Ascending aorta (tissue), 2 donors: ENCODE measurements at regions of chr19 and their contacts with region 1.

Region 1: GRCh38 chr19:15324791-15325519 is 7.4 kb downstream of the BRD4 start:
- DNase-seq: no peak
- H3K4me3 ChIP-seq: peak overlapping the region in 1 of 2 donors; percentile 34
- H3K27ac ChIP-seq: peak overlapping the region; percentile 68 to 74
- H3K4me1 ChIP-seq: peaks cover 11 to 92% of the 10 kb centered on the region in 2 donors
- H3K27me3 ChIP-seq: no peaks in the 10 kb centered on the region
- CTCF ChIP-seq: peak in 1 of 3 experiments; percentile 12

Region 2: GRCh38 chr19:15280915-15281683 is 43.9 kb before region 1 on chr19:
- intact Hi-C with region 1: loop called (anchors 5 kb)
- DNase-seq: peak in 1 of 2 donors; percentile 84
- H3K4me3 ChIP-seq: no peak overlapping the region
- H3K27ac ChIP-seq: peak overlapping the region; percentile 71 to 73
- H3K4me1 ChIP-seq: peaks cover 37 to 95% of the 10 kb centered on the region in 2 donors
- H3K27me3 ChIP-seq: no peaks in the 10 kb centered on the region
- CTCF ChIP-seq: peak in 2 of 3 experiments; percentile 21 to 23

Region 3: DNA sequence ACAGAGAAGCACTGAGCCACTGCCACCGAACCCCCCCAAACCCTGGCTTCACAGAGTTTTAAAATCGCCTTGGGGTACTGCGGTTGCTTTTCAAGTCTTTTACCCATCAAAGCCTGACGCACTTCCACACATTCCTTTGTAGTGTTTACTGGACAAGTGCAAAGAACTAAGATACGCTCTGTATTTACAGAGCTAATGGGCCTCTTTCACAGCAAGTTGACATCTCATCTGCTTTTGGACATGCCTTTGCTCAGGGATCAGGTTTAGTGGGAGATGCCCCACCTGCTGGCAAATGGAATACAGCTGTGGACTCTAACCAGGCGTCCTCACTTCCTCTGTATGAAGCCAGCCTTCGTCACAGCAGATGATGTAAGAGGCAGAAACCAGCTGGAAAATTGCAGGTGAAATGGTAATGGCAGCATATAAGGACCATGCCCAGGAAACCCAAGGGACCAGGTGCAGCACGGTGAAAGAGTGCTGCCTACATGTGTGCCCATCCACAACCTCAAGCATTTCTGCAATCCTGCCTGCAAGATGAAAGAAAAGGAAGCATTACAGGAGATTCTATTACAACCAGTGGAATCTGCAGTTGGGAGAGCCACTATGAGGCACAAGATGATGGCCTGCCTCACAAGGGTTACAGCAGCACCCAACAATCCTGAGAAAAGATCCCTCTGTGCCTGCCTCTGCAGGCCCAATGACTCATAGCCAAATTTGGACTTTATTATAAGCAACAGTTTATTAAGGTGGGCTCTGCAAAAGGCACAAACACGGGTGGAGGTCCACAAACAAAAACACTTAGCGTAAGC is 27.3 kb before region 1 on chr19:
- intact Hi-C with region 1: loop called (anchors 2 kb)
- DNase-seq: no peak
- H3K4me3 ChIP-seq: peak overlapping the region in 1 of 2 donors; percentile 21
- H3K27ac ChIP-seq: peak overlapping the region; percentile 42 to 54
- H3K4me1 ChIP-seq: peaks cover 21 to 86% of the 10 kb centered on the region in 2 donors
- H3K27me3 ChIP-seq: no peaks in the 10 kb centered on the region
- CTCF ChIP-seq: no peak

Region 4: DNA sequence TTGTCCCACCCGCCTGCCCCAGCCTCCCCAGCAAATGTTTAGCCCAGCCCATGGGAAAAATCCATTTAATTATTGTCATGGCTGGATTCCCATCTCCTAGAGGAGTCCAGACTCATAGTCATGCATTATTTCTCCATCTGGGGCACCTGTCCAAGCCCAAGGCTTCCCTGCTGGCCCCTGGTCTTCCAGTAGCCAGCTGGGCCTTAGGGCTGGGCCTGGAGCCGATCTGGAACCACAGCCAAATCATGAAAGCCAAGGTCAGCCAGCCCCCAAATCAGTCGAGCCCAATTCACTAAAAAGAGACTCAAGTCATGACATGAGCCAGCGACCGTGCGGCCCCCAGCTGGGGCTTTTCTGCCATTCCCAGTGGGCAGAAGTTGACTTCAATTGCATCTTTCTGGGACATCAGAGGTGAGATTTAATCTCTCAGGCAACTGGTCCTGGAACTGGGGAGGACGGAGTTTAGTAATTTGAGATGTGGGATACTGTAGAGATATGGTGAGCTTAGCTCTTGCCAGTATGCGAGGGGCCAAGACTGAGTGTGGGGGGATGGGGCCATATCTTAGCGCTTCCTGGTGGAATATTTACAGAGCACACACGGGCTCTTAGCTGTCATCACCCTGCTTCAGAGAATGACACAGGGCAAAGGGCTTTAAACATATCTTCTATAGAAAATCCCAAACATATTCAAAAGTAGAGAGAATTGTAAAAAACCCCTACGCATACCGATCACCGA is 163.7 kb after region 1 on chr19:
- intact Hi-C with region 1: no loop called
- DNase-seq: no peak
- H3K4me3 ChIP-seq: no peak overlapping the region
- H3K27ac ChIP-seq: no peak overlapping the region
- H3K4me1 ChIP-seq: no peaks in the 10 kb centered on the region
- H3K27me3 ChIP-seq: no peaks in the 10 kb centered on the region
- CTCF ChIP-seq: no peak